Spleen (tissue), 13 donors: ENCODE measurements at regions of chr2 and their contacts with region 1.

Region 1: DNA sequence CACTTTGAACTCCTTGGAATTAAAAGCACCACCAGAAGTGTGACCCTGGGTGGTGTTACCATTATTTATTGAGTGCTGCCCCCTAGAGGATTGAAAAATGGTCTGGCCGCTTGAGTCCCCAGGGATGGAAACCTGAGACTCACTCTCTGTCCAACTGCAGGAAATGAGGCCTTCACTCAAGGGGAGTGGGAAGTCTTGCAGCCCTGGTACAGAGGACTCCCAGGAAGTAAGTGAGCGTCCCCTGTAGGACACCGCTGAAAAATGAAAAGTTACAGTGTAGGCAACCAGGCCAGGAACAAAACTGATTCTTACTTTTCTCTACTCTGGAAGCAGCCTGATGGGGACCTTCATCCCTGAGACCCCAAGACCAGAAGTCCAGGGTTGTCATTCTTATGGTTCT is 2.2 kb upstream of the NRP2 start:
- DNase-seq: no peak
- H3K4me3 ChIP-seq: no peak overlapping the region
- H3K27ac ChIP-seq: no peak overlapping the region
- H3K4me1 ChIP-seq: peaks cover 6 to 63% (median 32%) of the 10 kb centered on the region in 6 donors
- H3K27me3 ChIP-seq: peaks cover 0 to 53% (median 17%) of the 10 kb centered on the region in 7 donors
- CTCF ChIP-seq: peak in 10 of 11 experiments; percentile 40 to 74 (median 63)
- POLR2A ChIP-seq: no peak

Region 2: GRCh38 chr2:204260162-204260877 is 1419.7 kb before region 1 on chr2:
- intact Hi-C with region 1: loop called (anchors 10 kb)
- DNase-seq: no peak
- H3K4me3 ChIP-seq: no peak overlapping the region
- H3K27ac ChIP-seq: no peak overlapping the region
- H3K4me1 ChIP-seq: peaks cover 0 to 44% (median 24%) of the 10 kb centered on the region in 6 donors
- H3K27me3 ChIP-seq: peaks cover 0 to 7% (median 0%) of the 10 kb centered on the region in 7 donors
- CTCF ChIP-seq: peak; percentile 20 to 77 (median 60)
- POLR2A ChIP-seq: no peak

Region 3: GRCh38 chr2:204325468-204325867 is 1354.6 kb before region 1 on chr2:
- intact Hi-C with region 1: loop called (anchors 5 kb)
- DNase-seq: no peak
- H3K4me3 ChIP-seq: no peak overlapping the region
- H3K27ac ChIP-seq: no peak overlapping the region
- H3K4me1 ChIP-seq: peaks cover 0 to 15% (median 6%) of the 10 kb centered on the region in 6 donors
- H3K27me3 ChIP-seq: no peaks in the 10 kb centered on the region
- CTCF ChIP-seq: peak; percentile 52 to 94 (median 80)
- POLR2A ChIP-seq: no peak

Region 4: DNA sequence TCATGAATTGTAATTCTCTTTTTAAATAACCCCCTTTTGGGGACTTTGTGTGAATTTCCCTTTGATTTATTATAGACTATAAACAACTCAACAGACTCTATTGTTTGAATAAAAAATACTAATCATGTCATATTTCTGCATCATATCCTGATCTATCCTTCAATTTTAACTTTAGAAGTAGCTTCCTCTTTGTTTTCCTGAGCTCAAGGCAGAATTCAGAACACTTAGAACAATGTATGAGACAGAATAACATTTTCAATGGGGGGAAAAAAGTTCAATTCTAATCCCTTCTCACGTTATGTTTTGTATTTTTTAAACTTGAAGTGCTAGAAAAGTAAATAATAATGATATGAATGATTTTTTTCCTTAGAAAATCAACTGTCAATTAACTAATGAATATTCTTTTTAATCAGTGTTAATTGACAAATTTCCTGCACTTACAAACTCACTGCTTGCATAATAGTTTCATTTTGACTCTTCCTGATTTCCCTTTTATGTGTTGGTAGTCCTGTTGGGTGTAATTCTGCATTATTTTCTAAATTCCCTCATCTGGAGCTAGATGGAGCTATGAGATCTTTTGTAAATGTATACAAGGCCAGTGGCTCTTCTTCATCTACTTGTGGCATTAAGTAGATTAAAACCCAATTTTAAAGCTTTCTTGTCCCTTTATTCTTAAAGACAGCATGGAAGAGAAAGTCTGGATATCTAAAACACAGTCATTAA is 808.7 kb before region 1 on chr2:
- intact Hi-C with region 1: loop called (anchors 10 kb)
- DNase-seq: no peak
- H3K4me3 ChIP-seq: no peak overlapping the region
- H3K27ac ChIP-seq: peak overlapping the region; percentile 6 to 58 (median 34)
- H3K4me1 ChIP-seq: peaks cover 0 to 14% (median 2%) of the 10 kb centered on the region in 6 donors
- H3K27me3 ChIP-seq: no peaks in the 10 kb centered on the region
- CTCF ChIP-seq: peak in 5 of 11 experiments; percentile 30 to 64 (median 45)
- POLR2A ChIP-seq: no peak